Activated naive CD4-positive, alpha-beta T cell treated with anti-CD3 and anti-CD28 coated beads, Interleukin-2, amount 10 ng/mL, durations not matched to agents 7 days and 5 days (primary cell): ENCODE measurements at regions of chr2 and their contacts with region 1.

Region 1: GRCh38 chr2:219509780-219510511 is 4.3 kb upstream of the ASIC4 start:
- DNase-seq: peak; percentile 68
- H3K4me3 Mint-ChIP-seq: no peak overlapping the region
- H3K27ac Mint-ChIP-seq: no peak overlapping the region
- H3K4me1 Mint-ChIP-seq: peaks cover 13% of the 10 kb centered on the region
- H3K27me3 Mint-ChIP-seq: peaks cover 74% of the 10 kb centered on the region

Region 2: DNA sequence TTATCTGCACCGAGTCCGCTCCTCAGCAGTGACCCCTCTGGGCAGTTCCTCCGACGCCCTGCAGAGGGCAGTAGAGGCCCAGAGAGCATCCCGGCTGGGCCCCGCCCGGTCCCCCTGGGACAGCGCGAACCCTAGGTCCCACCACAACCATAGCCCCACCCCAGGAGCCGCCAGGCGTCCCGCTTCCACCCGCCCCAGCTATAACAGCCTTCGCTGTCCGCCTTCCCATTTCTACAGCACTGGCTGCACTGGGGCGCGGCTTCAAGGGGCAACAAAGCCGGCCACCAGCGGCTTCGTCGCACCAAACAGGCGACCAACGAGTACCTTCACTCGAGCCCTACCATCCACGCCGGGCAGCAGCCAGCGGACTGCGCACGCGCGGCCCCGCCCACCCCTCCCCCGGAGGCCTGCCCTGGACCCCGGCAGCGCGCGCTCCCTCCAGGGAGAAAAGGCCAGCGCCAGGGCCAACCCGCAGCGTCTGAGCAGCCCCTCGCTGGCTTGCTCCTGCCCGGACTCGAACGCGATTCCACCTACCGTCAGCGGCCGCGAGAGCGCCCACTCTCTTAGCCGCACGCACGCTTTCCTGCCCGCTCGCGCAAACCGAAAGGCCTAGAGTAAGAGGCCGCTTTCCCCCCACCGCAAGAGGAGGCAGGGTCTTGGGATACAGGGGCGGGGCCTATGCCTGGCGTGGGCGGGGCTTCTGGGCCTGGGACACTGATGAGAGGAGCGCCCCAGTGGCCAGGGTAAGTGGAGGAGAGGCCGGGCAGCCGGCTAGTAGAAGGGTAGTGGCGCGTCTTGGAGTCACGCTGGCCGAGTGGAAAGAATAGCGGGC is 349.5 kb before region 1 on chr2 and contains the start of gene NHEJ1:
- CTCF ChIA-PET with region 1: no interaction called
- DNase-seq: peak; percentile 95
- H3K4me3 Mint-ChIP-seq: peak within 1 kb of the TSS; percentile 90
- H3K27ac Mint-ChIP-seq: peak within 1 kb of the TSS; percentile 97
- H3K4me1 Mint-ChIP-seq: peaks cover 27% of the 10 kb centered on the region
- H3K27me3 Mint-ChIP-seq: no peaks in the 10 kb centered on the region

Region 3: DNA sequence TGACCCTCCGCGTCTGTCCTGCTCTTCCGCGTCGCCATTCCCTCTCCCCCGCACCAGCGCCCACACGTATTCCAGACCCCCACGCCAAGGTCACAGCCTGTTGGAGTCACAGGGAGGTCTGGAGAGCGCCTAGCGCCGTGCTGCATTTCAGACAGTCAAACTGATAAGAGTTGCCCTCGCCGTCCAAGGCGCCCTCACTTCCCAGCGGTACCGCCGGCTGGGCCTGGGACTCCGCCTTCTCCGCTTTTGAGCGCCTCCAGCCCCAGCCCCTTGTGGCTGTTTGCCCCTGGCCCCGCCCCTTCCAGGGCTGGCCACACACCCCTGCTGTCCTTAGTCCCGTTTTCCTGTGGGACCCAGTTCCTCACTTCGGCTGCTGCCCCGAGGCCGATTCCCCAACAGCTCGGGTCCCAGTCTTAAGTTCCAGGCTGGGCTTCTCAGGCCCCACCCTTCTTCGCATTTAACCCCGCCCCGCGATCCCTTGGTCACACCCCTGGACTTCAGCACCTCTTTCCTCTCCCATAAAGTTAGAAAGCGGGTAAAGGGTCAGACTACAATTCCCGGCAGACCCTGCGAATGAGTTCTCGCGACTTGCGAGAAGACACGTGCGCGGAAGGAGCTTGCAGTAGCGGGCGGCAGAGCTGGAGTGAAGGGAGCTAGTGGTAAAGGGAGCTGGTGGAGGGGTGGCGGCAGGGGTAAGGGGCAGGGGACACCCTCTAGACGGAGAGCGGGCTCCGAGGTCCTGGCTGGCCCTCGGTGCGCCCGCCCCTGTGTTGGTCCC is 11.5 kb before region 1 on chr2 and contains the start of gene GMPPA:
- CTCF ChIA-PET with region 1: interaction called, 25 read pairs
- DNase-seq: peak; percentile 98
- H3K4me3 Mint-ChIP-seq: peak within 1 kb of the TSS; percentile 92
- H3K27ac Mint-ChIP-seq: peak within 1 kb of the TSS; percentile 73
- H3K4me1 Mint-ChIP-seq: peaks cover 41% of the 10 kb centered on the region
- H3K27me3 Mint-ChIP-seq: peaks cover 53% of the 10 kb centered on the region

Region 4: DNA sequence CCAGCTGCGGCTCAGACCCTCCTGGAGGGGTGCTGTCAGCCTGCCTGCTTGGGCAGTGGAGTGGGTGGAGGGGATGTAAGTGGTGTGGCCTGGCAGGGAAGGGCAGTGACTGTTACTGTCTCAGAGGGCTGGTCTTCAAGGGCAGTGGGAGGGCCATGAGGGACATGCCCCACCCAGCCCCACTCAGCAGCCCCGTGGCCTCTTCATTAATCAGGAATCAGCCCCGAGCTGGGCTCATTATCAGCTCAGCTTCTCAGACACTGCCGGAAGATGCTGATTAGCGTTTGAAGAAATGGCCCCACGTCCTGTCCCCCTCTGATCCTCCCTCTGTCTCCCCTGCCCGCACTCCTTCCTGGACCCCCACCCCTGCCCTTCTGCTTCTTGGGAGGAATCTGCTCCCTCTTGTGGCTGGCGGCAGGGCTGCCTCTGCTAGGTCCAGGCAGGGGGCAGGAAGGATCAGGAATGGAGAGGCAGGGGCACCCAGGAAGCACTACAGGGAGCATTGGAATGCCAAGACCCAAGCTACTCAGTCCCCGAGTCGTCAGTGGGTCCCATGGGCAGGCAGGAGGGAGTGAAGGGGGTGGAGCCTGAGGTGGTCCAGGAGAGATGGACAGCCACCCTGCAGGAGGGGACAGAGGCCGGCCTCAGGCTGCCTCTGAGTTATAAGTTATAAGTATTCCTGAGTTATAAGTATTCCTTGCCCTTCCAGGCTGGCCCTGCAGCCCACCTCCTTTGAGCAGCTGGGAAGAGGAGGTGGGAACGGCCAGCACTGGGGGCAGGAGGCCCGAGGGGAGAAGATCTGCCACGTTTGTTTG is 11.3 kb after region 1 on chr2:
- CTCF ChIA-PET with region 1: interaction called, 11 read pairs
- DNase-seq: no peak
- H3K4me3 Mint-ChIP-seq: no peak overlapping the region
- H3K27ac Mint-ChIP-seq: no peak overlapping the region
- H3K4me1 Mint-ChIP-seq: peaks cover 2% of the 10 kb centered on the region
- H3K27me3 Mint-ChIP-seq: peaks cover 96% of the 10 kb centered on the region